ENCODE measurements at regions of chr1 and their contacts with region 1.

Region 1: DNA sequence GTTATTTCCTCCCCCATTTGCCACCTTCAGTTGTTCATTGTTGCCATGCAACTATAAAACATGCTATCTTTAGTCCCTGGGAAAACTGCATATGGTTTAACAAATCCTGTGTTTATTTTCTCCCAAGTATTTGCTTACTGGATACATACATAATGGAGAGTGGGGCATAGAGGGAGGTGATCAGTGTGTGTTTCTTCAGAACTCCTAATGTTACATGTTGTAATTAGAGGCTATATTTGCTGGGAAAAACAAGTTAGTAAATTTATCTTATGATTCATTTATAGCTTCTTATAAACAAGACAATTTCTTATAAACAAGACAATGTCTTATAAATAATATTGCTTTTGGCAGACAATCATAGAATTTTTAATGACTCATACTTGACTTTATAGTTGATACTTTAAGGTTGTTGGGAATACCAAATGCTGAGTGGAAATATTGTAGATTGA is 7.3 kb upstream of the GIPC2 start:
- DNase-seq: no peak
- H3K4me3 ChIP-seq: no peak overlapping the region
- H3K27ac ChIP-seq: no peak overlapping the region
- H3K4me1 ChIP-seq: no peaks in the 10 kb centered on the region
- H3K27me3 ChIP-seq: peaks cover 2% of the 10 kb centered on the region
- CTCF ChIP-seq: no peak

Region 2: GRCh38 chr1:78070758-78071157 is 32.2 kb after region 1 on chr1:
- CTCF ChIA-PET with region 1: no interaction called
- POLR2A ChIA-PET with region 1: no interaction called
- intact Hi-C with region 1: no loop called
- DNase-seq: peak; percentile 20
- H3K4me3 ChIP-seq: no peak overlapping the region
- H3K27ac ChIP-seq: no peak overlapping the region
- H3K4me1 ChIP-seq: no peaks in the 10 kb centered on the region
- H3K27me3 ChIP-seq: no peaks in the 10 kb centered on the region
- CTCF ChIP-seq: no peak

Region 3: DNA sequence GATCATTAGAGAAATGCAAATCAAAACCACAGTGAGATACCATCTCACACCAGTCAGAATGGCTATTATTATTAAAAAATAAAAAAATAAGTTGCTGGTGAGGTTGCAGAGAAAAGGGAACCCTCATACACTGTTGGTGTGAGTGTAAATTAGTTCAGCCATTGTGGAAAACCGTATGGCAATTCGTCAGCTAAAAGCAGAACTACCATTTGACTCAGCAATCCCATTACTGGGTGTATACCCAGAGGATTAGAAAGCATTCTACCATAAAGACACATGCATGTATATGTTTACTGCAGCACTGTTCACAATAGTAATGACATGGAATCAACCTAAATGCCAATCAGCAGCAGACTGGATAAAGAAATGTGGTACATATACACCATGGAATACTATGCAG is 49.5 kb after region 1 on chr1:
- CTCF ChIA-PET with region 1: no interaction called
- POLR2A ChIA-PET with region 1: no interaction called
- intact Hi-C with region 1: loop called (anchors 5 kb)
- DNase-seq: no peak
- H3K4me3 ChIP-seq: no peak overlapping the region
- H3K27ac ChIP-seq: no peak overlapping the region
- H3K4me1 ChIP-seq: no peaks in the 10 kb centered on the region
- H3K27me3 ChIP-seq: no peaks in the 10 kb centered on the region
- CTCF ChIP-seq: no peak